ENCODE measurements at regions of chr2 and their contacts with region 1.

Region 1: GRCh38 chr2:85888684-85889626 is at the start of gene ST3GAL5:
- DNase-seq: peak; percentile 92
- H3K4me3 Mint-ChIP-seq: peak within 1 kb of the TSS; percentile 84
- H3K27ac Mint-ChIP-seq: peak within 1 kb of the TSS; percentile 79
- H3K4me1 Mint-ChIP-seq: peaks cover 68% of the 10 kb centered on the region
- H3K27me3 Mint-ChIP-seq: peaks cover 3% of the 10 kb centered on the region
- total RNA-seq, gene ST3GAL5: 58.3 to 67.1 TPM

Region 2: DNA sequence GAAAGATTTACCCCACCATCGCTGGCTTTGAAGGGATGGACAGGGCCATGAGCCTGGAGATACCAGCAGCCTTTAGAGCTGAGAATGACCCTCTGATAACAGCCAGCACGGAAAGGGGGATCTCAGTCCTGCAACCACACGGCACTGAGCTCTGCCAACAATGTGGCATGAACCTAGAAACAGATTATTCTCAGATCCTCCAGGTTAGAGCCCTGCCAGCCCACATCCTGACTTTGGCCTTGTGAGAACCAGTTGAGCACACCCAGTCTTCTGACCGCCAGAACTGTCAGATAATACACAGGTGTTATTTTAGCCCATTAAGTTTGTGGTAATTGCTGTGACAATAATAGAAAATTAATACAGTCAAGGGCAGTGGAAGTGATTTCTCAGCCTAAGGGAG is 204.1 kb before region 1 on chr2:
- CTCF ChIA-PET with region 1: no interaction called
- POLR2A ChIA-PET with region 1: no interaction called
- DNase-seq: peak; percentile 27
- H3K4me3 Mint-ChIP-seq: no peak overlapping the region
- H3K27ac Mint-ChIP-seq: no peak overlapping the region
- H3K4me1 Mint-ChIP-seq: peaks cover 25% of the 10 kb centered on the region
- H3K27me3 Mint-ChIP-seq: peaks cover 20% of the 10 kb centered on the region

Region 3: GRCh38 chr2:85844486-85844885 is 44.5 kb before region 1 on chr2:
- CTCF ChIA-PET with region 1: interaction called, 42 read pairs
- POLR2A ChIA-PET with region 1: interaction called, 59 read pairs
- DNase-seq: no peak
- H3K4me3 Mint-ChIP-seq: no peak overlapping the region
- H3K27ac Mint-ChIP-seq: no peak overlapping the region
- H3K4me1 Mint-ChIP-seq: peaks cover 24% of the 10 kb centered on the region
- H3K27me3 Mint-ChIP-seq: no peaks in the 10 kb centered on the region

Region 4: DNA sequence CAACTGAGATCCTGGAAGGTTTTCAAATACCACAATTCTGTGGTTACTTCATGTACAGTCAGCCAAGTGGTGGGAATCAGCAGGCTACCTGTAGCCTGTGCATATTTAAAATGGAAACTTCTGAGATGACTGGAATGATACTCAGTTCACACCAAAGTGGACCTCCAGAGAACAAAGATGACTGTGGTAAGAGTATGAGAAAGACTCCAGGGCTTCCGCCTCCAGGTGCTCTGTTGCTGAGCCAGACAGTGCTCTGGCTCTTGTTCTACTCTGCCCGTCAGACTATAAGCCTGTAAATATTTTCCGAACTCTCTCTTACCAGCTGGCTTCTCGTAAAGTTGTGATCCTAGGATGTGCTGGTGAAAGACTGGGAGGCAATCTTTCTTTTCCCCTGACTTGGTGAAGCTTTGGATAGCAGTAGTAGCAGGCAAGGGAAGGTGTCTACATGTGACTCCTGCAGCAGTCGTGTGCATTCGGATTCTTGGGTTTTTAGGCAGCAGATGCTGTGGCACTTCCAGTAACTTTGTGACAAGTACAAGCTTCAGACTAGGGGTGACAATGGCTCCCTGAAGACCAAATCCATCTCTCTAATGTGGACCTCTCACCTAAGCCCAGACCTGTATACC is 23.3 kb before region 1 on chr2:
- CTCF ChIA-PET with region 1: interaction called, 6 read pairs
- POLR2A ChIA-PET with region 1: interaction called, 15 read pairs
- DNase-seq: no peak
- H3K4me3 Mint-ChIP-seq: no peak overlapping the region
- H3K27ac Mint-ChIP-seq: no peak overlapping the region
- H3K4me1 Mint-ChIP-seq: peaks cover 64% of the 10 kb centered on the region
- H3K27me3 Mint-ChIP-seq: no peaks in the 10 kb centered on the region

Region 5: GRCh38 chr2:86017901-86018896 is 129.2 kb after region 1 on chr2:
- CTCF ChIA-PET with region 1: interaction called, 6 read pairs
- POLR2A ChIA-PET with region 1: interaction called, 14 read pairs
- DNase-seq: no peak
- H3K4me3 Mint-ChIP-seq: no peak overlapping the region
- H3K27ac Mint-ChIP-seq: peak overlapping the region; percentile 89
- H3K4me1 Mint-ChIP-seq: peaks cover 33% of the 10 kb centered on the region
- H3K27me3 Mint-ChIP-seq: no peaks in the 10 kb centered on the region

Region 6: GRCh38 chr2:86068136-86068588 is 179.2 kb after region 1 on chr2:
- CTCF ChIA-PET with region 1: interaction called, 12 read pairs
- POLR2A ChIA-PET with region 1: no interaction called
- DNase-seq: peak; percentile 74
- H3K4me3 Mint-ChIP-seq: no peak overlapping the region
- H3K27ac Mint-ChIP-seq: peak overlapping the region; percentile 76
- H3K4me1 Mint-ChIP-seq: peaks cover 33% of the 10 kb centered on the region
- H3K27me3 Mint-ChIP-seq: no peaks in the 10 kb centered on the region